ENCODE measurements at regions of chr12 and their contacts with region 1.

Region 1: GRCh38 chr12:112788205-112788604 is 3.3 kb upstream of the RPH3A start:
- DNase-seq: no peak
- H3K4me3 ChIP-seq: no peak overlapping the region
- H3K27ac ChIP-seq: no peak overlapping the region
- H3K4me1 ChIP-seq: peaks cover 7 to 11% (median 10%) of the 10 kb centered on the region in 4 experiments; a peak in 6 of 7 replicates
- H3K27me3 ChIP-seq: peaks cover 6 to 20% (median 16%) of the 10 kb centered on the region in 4 experiments; a peak in 6 of 7 replicates
- CTCF ChIP-seq: peak; percentile 11 to 54 (median 52)
- EP300 ChIP-seq: no peak
- POLR2A ChIP-seq: no peak
- RAD21 ChIP-seq: peak; percentile 28 to 45

Region 2: GRCh38 chr12:112750971-112751370 is 37.2 kb before region 1 on chr12:
- CTCF ChIA-PET with region 1: no interaction called
- POLR2A ChIA-PET with region 1: no interaction called
- DNase-seq: no peak
- H3K4me3 ChIP-seq: no peak overlapping the region
- H3K27ac ChIP-seq: no peak overlapping the region
- H3K4me1 ChIP-seq: no peaks in the 10 kb centered on the region
- H3K27me3 ChIP-seq: no peaks in the 10 kb centered on the region
- CTCF ChIP-seq: no peak
- EP300 ChIP-seq: no peak
- POLR2A ChIP-seq: no peak
- RAD21 ChIP-seq: no peak

Region 3: GRCh38 chr12:112777387-112778310 is 10.6 kb before region 1 on chr12:
- CTCF ChIA-PET with region 1: interaction called, 10 read pairs
- POLR2A ChIA-PET with region 1: interaction called, 4 read pairs
- DNase-seq: peak in 1 of 2 experiments; percentile 60
- H3K4me3 ChIP-seq: peak overlapping the region in 1 of 4 experiments; percentile 36; a peak in 1 of 8 replicates
- H3K27ac ChIP-seq: peak overlapping the region; percentile 48
- H3K4me1 ChIP-seq: peaks cover 0 to 23% (median 15%) of the 10 kb centered on the region in 4 experiments; a peak in 3 of 7 replicates
- H3K27me3 ChIP-seq: peaks cover 0 to 9% (median 0%) of the 10 kb centered on the region in 4 experiments; a peak in 2 of 7 replicates
- CTCF ChIP-seq: no peak
- EP300 ChIP-seq: peak in 1 of 2 experiments; percentile 73; a peak in 1 of 3 replicates
- POLR2A ChIP-seq: no peak
- RAD21 ChIP-seq: peak in 1 of 2 experiments; percentile 5; a peak in 1 of 4 replicates

Region 4: GRCh38 chr12:112822056-112822455 is 33.9 kb after region 1 on chr12:
- CTCF ChIA-PET with region 1: interaction called, 24 read pairs
- POLR2A ChIA-PET with region 1: no interaction called
- DNase-seq: no peak
- H3K4me3 ChIP-seq: no peak overlapping the region
- H3K27ac ChIP-seq: no peak overlapping the region
- H3K4me1 ChIP-seq: peaks cover 0 to 11% (median 5%) of the 10 kb centered on the region in 4 experiments; a peak in 4 of 7 replicates
- H3K27me3 ChIP-seq: no peaks in the 10 kb centered on the region
- CTCF ChIP-seq: no peak
- EP300 ChIP-seq: no peak
- POLR2A ChIP-seq: no peak
- RAD21 ChIP-seq: no peak

Region 5: GRCh38 chr12:112868459-112869041 is 80.3 kb after region 1 on chr12:
- CTCF ChIA-PET with region 1: no interaction called
- POLR2A ChIA-PET with region 1: no interaction called
- DNase-seq: peak in 1 of 2 experiments; percentile 54
- H3K4me3 ChIP-seq: no peak overlapping the region
- H3K27ac ChIP-seq: no peak overlapping the region
- H3K4me1 ChIP-seq: no peaks in the 10 kb centered on the region
- H3K27me3 ChIP-seq: no peaks in the 10 kb centered on the region
- CTCF ChIP-seq: no peak
- EP300 ChIP-seq: no peak
- POLR2A ChIP-seq: no peak
- RAD21 ChIP-seq: no peak; a peak in 1 of 4 replicates

Measured in H1 (cell line).